ENCODE measurements at regions of chr3 and their contacts with region 1.

Region 1: GRCh38 chr3:103991461-103992115 is 1375.1 kb upstream of the ALCAM start:
- DNase-seq: peak; percentile 61
- H3K4me3 Mint-ChIP-seq: no peak overlapping the region
- H3K27ac Mint-ChIP-seq: no peak overlapping the region
- H3K4me1 Mint-ChIP-seq: no peaks in the 10 kb centered on the region
- H3K27me3 Mint-ChIP-seq: peaks cover 51% of the 10 kb centered on the region
- CTCF ChIP-seq: peak; percentile 73

Region 2: DNA sequence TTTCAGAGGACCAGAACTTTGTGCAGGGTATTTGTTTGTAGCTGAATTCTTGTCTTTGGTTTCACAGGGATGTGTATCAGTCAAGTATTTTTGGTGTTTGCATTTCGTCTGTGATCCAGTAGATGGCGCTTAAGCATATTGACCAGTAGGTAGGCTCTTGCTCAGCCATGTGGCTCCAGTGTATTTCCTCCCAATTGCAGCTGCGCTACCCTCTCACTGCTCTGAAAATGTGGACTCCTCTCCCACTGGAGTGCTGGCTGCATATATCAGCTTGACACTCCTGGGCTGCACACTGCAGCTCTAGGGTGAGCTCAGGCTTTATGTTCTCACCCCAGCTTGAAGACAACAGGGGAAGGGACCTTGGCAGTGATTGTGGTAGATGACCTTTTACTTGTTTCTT is 110.8 kb after region 1 on chr3:
- CTCF ChIA-PET with region 1: no interaction called
- POLR2A ChIA-PET with region 1: no interaction called
- intact Hi-C with region 1: loop called (anchors 10 kb)
- DNase-seq: peak; percentile 64
- H3K4me3 Mint-ChIP-seq: no peak overlapping the region
- H3K27ac Mint-ChIP-seq: no peak overlapping the region
- H3K4me1 Mint-ChIP-seq: peaks cover 13% of the 10 kb centered on the region
- H3K27me3 Mint-ChIP-seq: no peaks in the 10 kb centered on the region
- CTCF ChIP-seq: peak; percentile 75

Region 3: GRCh38 chr3:104149154-104149553 is 157.6 kb after region 1 on chr3:
- CTCF ChIA-PET with region 1: no interaction called
- POLR2A ChIA-PET with region 1: no interaction called
- intact Hi-C with region 1: no loop called
- DNase-seq: no peak
- H3K4me3 Mint-ChIP-seq: no peak overlapping the region
- H3K27ac Mint-ChIP-seq: no peak overlapping the region
- H3K4me1 Mint-ChIP-seq: no peaks in the 10 kb centered on the region
- H3K27me3 Mint-ChIP-seq: no peaks in the 10 kb centered on the region
- CTCF ChIP-seq: no peak

Region 4: GRCh38 chr3:104273046-104273649 is 281.6 kb after region 1 on chr3:
- CTCF ChIA-PET with region 1: no interaction called
- POLR2A ChIA-PET with region 1: no interaction called
- intact Hi-C with region 1: loop called (anchors 5 kb)
- DNase-seq: peak; percentile 40
- H3K4me3 Mint-ChIP-seq: no peak overlapping the region
- H3K27ac Mint-ChIP-seq: no peak overlapping the region
- H3K4me1 Mint-ChIP-seq: no peaks in the 10 kb centered on the region
- H3K27me3 Mint-ChIP-seq: no peaks in the 10 kb centered on the region
- CTCF ChIP-seq: peak; percentile 50

Region 5: DNA sequence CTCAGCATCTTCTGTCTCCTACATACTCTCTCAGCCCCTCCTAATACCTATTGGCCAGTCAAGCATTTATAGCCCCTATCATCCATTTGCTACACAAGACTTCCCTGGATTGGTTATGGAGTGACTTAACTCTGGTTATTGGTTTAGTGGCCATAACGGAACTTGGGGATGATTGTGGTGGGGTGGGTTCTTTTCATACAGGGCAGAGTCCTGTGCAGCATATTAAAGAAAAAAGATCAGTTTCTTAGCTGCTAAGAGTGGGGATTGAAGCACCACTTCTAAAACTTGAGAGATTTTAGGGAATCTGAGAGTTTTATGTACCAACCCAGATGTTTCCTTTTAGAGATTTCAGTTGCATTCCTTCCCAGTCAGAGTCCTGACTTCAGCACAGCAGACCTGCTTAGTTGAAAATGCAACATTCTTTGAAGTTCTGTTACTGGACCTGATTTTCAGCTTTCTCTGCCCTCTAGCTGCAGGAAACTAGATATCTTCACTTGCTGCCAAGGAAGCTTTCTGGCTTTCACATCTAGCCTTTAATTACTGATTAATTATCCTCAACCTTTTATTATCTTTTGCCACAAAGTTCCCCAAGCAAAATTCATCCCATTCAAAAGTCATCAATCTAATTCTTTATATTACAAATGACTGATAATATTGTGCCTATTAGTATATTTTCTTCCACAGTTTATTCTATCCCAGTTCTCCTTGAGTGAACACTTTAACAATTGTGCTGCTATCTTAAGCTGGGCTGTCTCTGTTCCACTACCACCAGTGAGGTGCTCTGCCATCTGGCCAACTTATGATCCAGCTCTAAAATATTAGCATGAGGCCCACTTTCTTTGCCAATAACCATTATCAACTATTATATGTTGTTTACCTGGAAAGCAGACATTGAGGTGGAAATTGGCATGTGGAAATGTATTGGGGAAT is 469.2 kb after region 1 on chr3:
- CTCF ChIA-PET with region 1: interaction called, 4 read pairs
- POLR2A ChIA-PET with region 1: no interaction called
- intact Hi-C with region 1: loop called (anchors 1 kb)
- DNase-seq: peak; percentile 20
- H3K4me3 Mint-ChIP-seq: no peak overlapping the region
- H3K27ac Mint-ChIP-seq: no peak overlapping the region
- H3K4me1 Mint-ChIP-seq: no peaks in the 10 kb centered on the region
- H3K27me3 Mint-ChIP-seq: no peaks in the 10 kb centered on the region
- CTCF ChIP-seq: peak; percentile 28

Region 6: GRCh38 chr3:105518806-105519418 is 1527.3 kb after region 1 on chr3:
- CTCF ChIA-PET with region 1: no interaction called
- POLR2A ChIA-PET with region 1: no interaction called
- intact Hi-C with region 1: loop called (anchors 5 kb)
- DNase-seq: peak; percentile 74
- H3K4me3 Mint-ChIP-seq: no peak overlapping the region
- H3K27ac Mint-ChIP-seq: no peak overlapping the region
- H3K4me1 Mint-ChIP-seq: no peaks in the 10 kb centered on the region
- H3K27me3 Mint-ChIP-seq: no peaks in the 10 kb centered on the region
- CTCF ChIP-seq: peak; percentile 60